ENCODE measurements at regions of chr16 and their contacts with region 1.

Region 1: GRCh38 chr16:56988948-56989945 is at the start of gene NLRC5:
- DNase-seq: peak; percentile 94
- H3K4me3 Mint-ChIP-seq: peak within 1 kb of the TSS; percentile 99
- H3K27ac Mint-ChIP-seq: peak within 1 kb of the TSS; percentile 100
- H3K4me1 Mint-ChIP-seq: peaks cover 71% of the 10 kb centered on the region
- H3K27me3 Mint-ChIP-seq: no peaks in the 10 kb centered on the region
- total RNA-seq, gene NLRC5: 259 to 263 TPM

Region 2: DNA sequence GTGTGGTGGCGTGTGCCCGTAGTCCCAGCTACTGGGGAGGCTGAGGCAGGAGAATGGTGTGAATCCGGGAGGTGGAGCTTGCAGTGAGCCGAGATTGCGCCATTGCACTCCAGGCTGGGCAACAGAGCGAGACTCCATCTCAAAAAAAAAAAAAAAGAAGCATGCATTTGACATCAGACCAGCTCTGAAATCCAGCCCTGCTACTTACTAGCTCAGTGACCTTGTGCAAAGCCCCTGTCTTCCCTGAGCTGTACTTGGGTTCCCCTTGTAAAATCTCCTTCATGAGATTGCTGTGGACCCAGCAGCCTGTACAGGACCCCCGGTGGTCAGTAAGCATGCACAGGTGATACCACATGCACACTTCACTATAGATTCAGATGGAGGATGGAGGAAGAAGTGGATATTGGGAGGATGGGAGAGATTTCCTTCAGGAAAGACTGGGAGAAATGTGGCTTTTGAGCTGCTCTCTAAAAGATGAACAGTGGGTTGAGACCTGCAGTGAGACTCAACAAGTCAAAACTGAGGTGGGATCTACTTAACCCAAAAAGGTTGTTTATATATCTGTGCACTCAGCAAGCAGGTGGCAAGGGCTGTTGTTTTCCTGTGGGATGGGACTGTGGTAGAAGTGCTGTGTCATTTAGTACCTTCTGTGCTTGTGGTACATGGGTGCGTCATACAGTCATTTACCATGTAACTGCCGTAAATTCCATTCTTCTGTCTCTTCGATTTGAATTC is 50.7 kb before region 1 on chr16:
- CTCF ChIA-PET with region 1: no interaction called
- POLR2A ChIA-PET with region 1: interaction called, 51 read pairs
- DNase-seq: peak; percentile 77
- H3K4me3 Mint-ChIP-seq: peak overlapping the region; percentile 68
- H3K27ac Mint-ChIP-seq: peak overlapping the region; percentile 93
- H3K4me1 Mint-ChIP-seq: peaks cover 84% of the 10 kb centered on the region
- H3K27me3 Mint-ChIP-seq: no peaks in the 10 kb centered on the region

Region 3: GRCh38 chr16:57000271-57001025 is 11.2 kb after region 1 on chr16:
- CTCF ChIA-PET with region 1: interaction called, 5 read pairs
- POLR2A ChIA-PET with region 1: interaction called, 373 read pairs
- DNase-seq: peak; percentile 65
- H3K4me3 Mint-ChIP-seq: peak overlapping the region; percentile 34
- H3K27ac Mint-ChIP-seq: peak overlapping the region; percentile 90
- H3K4me1 Mint-ChIP-seq: peaks cover 92% of the 10 kb centered on the region
- H3K27me3 Mint-ChIP-seq: no peaks in the 10 kb centered on the region

Region 4: DNA sequence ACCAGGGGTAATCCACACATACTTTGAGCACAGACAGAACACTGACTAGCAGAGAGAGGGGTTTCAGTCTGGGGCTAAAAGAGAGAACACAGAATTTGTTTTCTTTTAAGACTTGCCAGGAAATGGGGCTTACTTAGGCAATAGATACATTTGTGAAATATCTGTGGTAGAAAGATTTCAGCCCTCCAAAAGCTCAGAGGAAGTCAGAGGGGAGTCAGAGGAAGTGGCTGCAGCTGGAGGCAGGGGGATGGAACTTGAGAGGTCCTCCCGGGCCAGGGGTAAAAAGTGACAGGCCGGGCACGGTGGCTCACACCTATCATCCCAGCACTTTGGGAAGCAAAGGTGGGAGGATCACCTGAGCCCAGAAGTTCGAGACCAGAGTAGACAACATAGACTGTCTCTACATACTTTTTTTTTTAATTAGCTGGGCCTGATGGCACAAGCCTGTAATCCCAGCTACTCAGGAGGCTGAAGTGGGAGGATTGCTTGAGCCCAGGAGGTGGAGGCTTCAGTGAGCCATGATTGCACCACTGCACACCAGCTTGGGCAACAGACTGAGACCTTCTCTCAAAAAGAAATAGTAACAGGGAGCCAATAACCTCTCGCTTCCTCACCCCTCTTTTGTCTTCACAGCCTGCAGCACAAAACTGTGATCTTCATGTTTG is 50.0 kb after region 1 on chr16:
- CTCF ChIA-PET with region 1: interaction called, 11 read pairs
- POLR2A ChIA-PET with region 1: interaction called, 47 read pairs
- DNase-seq: peak; percentile 49
- H3K4me3 Mint-ChIP-seq: no peak overlapping the region
- H3K27ac Mint-ChIP-seq: peak overlapping the region; percentile 94
- H3K4me1 Mint-ChIP-seq: peaks cover 84% of the 10 kb centered on the region
- H3K27me3 Mint-ChIP-seq: no peaks in the 10 kb centered on the region

Region 5: DNA sequence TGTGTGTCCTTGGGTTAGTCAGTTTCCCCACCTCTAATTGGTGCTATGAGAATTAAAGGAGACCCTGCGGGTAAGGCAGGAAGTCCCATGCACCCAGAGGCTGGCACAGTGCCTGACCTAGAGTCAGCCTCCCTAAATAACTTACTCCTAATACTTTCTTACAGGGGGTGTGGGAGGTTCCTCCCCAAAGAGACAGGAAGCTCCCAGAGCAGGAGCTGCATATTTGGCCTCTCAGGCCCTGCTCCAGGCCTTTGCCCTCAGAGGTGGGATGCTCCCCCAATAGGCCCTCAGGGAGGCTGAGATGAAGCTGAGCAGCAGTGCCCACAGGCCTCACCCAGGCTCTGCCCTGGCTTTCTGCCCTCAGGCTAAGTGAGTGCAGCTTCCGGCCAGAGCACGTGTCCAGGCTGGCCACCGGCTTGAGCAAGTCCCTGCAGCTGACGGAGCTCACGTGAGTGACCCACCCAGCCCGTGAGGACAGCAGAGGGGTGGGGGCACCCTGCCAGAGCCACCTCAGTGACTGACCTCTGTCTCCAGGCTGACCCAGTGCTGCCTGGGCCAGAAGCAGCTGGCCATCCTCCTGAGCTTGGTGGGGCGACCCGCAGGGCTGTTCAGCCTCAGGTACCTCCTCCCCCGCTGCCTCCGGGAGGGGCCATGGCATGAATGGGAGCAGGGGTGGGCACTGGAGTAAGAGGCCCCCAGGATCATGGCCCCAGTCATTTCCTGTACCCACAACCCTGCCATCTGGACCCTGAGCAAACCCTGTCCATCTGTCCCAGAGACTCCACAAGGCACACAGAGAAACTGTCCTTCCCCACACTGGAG is 72.0 kb after region 1 on chr16:
- CTCF ChIA-PET with region 1: no interaction called
- POLR2A ChIA-PET with region 1: no interaction called
- DNase-seq: no peak
- H3K4me3 Mint-ChIP-seq: no peak overlapping the region
- H3K27ac Mint-ChIP-seq: no peak overlapping the region
- H3K4me1 Mint-ChIP-seq: no peaks in the 10 kb centered on the region
- H3K27me3 Mint-ChIP-seq: no peaks in the 10 kb centered on the region

Measured in activated CD4-positive, alpha-beta memory T cell treated with anti-CD3 and anti-CD28 coated beads, Interleukin-2, amount 10 ng/mL, durations not matched to agents 7 days and 5 days (primary cell).